ENCODE measurements at regions of chr1 and their contacts with region 1.

Region 1: DNA sequence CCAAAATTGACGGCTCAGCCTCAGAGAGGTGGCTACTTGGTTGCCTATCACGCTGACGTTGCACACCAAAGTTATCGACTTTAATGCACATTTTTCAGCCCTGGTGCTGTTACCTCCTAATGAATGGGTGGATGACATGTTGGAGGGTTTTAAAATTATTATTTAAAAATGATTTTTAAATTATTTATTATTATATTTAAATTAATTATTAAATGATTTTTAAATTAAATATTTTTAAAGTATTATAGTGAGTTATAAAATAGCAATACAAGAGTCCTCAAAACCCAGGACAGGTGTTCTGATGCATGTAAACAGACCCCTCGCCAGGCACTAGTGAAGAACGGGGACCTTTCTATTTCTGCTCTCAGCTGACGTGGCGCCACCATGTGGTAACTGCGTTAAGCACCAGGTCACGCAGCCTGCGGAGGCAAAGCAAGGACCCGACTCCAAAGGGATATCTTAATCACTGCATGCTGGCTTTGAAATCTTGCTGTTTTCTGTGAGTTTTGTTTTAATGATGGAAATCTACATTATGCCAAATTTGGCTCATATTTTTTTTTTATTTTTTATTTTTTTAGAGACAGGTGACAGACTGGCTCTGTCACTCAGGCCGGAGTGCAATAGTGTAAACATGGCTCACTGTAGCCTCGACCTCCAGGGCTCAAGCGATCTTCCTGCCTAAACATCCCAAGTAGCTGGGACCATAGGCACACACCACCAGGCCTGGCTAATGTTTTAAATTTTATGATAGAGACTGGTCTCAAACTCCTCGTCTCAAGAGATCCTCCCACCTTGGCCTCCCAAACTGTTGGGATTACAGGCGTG is 22.6 kb downstream of the CASP9 start:
- DNase-seq: peak; percentile 66 to 91 (median 79)
- H3K4me3 ChIP-seq: no peak overlapping the region
- H3K27ac ChIP-seq: no peak overlapping the region
- H3K4me1 ChIP-seq: no peaks in the 10 kb centered on the region
- H3K27me3 ChIP-seq: no peaks in the 10 kb centered on the region
- CTCF ChIP-seq: peak; percentile 44 to 76 (median 68)
- POLR2A ChIP-seq: no peak

Region 2: DNA sequence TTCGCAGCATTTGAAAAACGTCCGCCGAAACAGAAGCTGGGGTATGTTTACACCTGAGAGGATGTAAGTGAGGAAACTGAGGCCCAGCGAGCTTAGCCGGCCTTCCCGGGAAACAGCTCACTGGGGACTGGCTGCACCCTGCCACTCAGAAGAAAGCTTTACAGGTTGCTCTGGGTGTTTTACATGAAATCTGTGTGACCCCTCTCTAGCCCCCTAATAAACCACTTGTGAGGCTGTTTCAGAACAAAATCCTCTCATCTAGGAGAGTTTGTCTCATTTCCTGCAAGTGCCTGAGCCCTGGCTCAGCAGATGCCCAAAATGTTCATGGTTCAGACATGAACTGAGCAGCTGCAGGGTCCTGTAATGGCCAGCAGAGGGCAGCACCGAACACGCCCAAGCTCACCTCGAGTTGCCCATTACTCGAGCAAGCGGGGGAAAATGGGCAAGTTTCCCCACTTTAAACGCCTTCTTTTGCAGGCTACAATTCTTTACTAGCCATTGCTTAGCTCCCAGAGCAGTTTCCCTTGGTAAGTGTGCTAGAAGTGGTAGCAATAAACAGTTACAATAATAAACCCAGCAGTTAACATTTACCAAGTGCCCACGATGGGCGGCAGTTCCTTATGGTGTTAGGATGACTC is 177.9 kb before region 1 on chr1:
- intact Hi-C with region 1: loop called (anchors 5 kb)
- DNase-seq: peak; percentile 79 to 95 (median 87)
- H3K4me3 ChIP-seq: no peak overlapping the region
- H3K27ac ChIP-seq: peak overlapping the region in 4 of 5 donors; percentile 35 to 86 (median 82)
- H3K4me1 ChIP-seq: peaks cover 7 to 18% of the 10 kb centered on the region in 2 donors
- H3K27me3 ChIP-seq: no peaks in the 10 kb centered on the region
- CTCF ChIP-seq: peak; percentile 97 to 100 (median 98)
- POLR2A ChIP-seq: no peak

Region 3: GRCh38 chr1:15328351-15329103 is 172.9 kb before region 1 on chr1:
- intact Hi-C with region 1: loop called (anchors 5 kb)
- DNase-seq: peak in 6 of 7 donors; percentile 53 to 78 (median 64)
- H3K4me3 ChIP-seq: no peak overlapping the region
- H3K27ac ChIP-seq: peak overlapping the region in 3 of 5 donors; percentile 18 to 67 (median 53)
- H3K4me1 ChIP-seq: peaks cover 15 to 34% of the 10 kb centered on the region in 2 donors
- H3K27me3 ChIP-seq: no peaks in the 10 kb centered on the region
- CTCF ChIP-seq: no peak
- POLR2A ChIP-seq: no peak

Measured in adrenal gland (tissue), 19 donors.